ENCODE measurements at regions of chr6 and their contacts with region 1.

Region 1: DNA sequence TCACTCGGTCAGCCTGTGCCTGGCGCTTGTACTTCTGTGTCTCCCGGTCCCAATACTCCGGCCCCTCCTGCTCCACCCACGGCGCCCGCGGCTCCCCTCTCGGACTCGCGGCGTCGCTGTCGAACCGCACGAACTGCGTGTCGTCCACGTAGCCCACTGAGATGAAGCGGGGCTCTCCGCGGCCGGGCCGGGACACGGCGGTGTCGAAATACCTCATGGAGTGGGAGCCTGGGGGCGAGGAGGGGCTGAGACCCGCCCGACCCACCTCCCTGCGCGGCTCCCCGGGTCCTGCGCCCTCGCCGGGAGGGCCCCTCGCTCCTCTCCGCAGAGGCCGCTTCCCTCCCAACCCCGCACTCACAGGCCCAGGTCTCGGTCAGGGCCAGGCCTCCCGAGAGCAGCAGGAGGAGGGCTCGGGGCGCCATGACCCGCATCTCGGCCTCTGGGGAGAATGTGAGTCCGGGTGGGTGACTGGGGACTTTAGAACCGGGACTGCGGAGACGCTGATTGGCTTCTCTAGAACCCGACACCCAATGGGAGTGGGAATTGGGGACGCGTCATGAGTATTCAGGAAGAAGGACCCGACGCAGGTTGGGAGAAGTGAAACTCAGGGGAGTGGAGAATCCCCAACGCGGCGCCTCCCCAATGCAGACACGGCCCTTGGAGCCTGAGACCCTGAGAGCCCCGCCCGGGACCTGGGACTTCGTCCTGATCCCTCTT is at the start of gene HLA-C:
- DNase-seq: peak; percentile 53 to 96 (median 92)
- H3K4me3 ChIP-seq: peak within 1 kb of the TSS; percentile 26 to 98 (median 71)
- H3K27ac ChIP-seq: peak within 1 kb of the TSS in 49 of 59 donors; percentile 11 to 98 (median 85)
- H3K27me3 ChIP-seq: peaks cover 0 to 4% (median 0%) of the 10 kb centered on the region in 45 donors
- CTCF ChIP-seq: peak in 6 of 56 donors; percentile 1 to 48 (median 10)
- total RNA-seq, gene HLA-C: 53.8 to 354 (median 124) TPM

Region 2: GRCh38 chr6:30955367-30956042 is 316.3 kb before region 1 on chr6:
- intact Hi-C with region 1: no loop called
- DNase-seq: peak in 7 of 10 donors; percentile 15 to 69 (median 43)
- H3K4me3 ChIP-seq: peak overlapping the region; percentile 3 to 81 (median 56)
- H3K27ac ChIP-seq: peak overlapping the region in 17 of 59 donors; percentile 0 to 84 (median 36)
- H3K27me3 ChIP-seq: peaks cover 0 to 38% (median 4%) of the 10 kb centered on the region in 45 donors
- CTCF ChIP-seq: no peak

Region 3: GRCh38 chr6:31203345-31203979 is 68.3 kb before region 1 on chr6:
- intact Hi-C with region 1: loop called (anchors 5 kb)
- DNase-seq: no peak
- H3K4me3 ChIP-seq: peak overlapping the region in 55 of 59 donors; percentile 8 to 59 (median 38)
- H3K27ac ChIP-seq: peak overlapping the region in 46 of 59 donors; percentile 2 to 80 (median 56)
- H3K27me3 ChIP-seq: no peaks in the 10 kb centered on the region
- CTCF ChIP-seq: no peak

Region 4: DNA sequence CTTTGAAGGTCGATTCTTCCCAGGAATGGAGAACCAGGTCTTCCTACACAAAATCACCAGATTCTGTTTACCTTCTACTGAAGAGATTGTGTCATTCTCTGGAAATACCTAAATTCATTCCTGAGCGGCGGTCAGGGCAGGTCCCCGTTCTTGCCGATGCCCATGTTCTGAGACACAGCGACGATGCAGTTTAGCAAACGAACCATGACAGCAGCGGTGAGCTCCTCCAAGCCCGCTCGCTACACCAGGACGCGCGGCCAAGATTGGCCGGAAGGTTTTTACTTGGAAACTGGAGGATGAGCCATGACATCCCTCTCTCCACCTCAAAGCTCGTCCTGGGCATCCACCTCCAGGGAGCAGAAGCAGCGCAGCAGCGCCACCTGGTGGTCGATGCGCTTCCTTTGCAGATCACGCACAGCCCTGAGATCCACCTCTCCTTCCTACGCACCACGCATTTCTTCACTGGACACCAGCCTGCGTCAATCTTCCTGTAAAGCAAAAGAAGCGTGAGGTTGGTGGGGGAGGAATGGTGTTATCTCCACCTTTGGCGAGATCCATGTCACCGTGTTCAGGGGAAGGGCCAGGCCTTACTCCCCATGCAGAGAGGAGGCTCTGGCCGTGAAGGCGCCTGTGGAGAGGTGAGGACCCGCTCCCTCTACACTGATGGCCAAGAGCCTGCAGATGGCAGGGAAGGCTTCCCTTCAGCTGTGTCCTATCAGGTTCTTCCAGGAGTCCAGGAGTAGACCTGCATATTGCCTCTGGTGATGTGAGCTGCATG is 95.1 kb after region 1 on chr6:
- intact Hi-C with region 1: loop called (anchors 2 to 5 kb)
- DNase-seq: peak; percentile 42 to 95 (median 87)
- H3K4me3 ChIP-seq: peak overlapping the region; percentile 16 to 68 (median 49)
- H3K27ac ChIP-seq: peak overlapping the region in 39 of 59 donors; percentile 6 to 80 (median 51)
- H3K27me3 ChIP-seq: peaks cover 0 to 26% (median 0%) of the 10 kb centered on the region in 45 donors
- CTCF ChIP-seq: peak; percentile 86 to 99 (median 95)

Measured in dorsolateral prefrontal cortex (tissue), 120 donors.